Activated CD4-positive, alpha-beta memory T cell treated with anti-CD3 and anti-CD28 coated beads, Interleukin-2, amount 10 ng/mL, durations not matched to agents 7 days and 5 days (primary cell): ENCODE measurements at regions of chr1 and their contacts with region 1.

Region 1: DNA sequence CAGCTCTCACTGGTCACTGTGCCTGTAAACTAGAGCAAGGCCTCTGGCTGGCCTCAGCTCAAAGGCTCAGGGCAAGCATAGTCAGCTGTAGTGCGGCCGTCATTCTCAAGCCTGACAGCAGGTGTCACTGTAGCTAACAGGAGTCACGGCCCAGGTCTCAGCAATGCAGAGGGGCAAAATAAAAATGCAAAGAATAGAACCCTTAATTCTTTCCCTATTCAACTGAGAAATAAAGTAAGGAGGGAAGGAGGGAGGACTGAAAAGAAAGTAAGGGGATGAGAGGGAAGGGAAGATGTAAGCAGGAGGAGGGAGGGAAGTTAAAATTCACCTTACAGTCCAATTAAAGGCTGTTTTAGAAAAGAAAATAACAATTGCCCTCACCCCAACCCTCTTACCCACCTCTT is 106.1 kb downstream of the KIAA0319L start:
- DNase-seq: peak; percentile 81
- H3K4me3 Mint-ChIP-seq: no peak overlapping the region
- H3K27ac Mint-ChIP-seq: no peak overlapping the region
- H3K4me1 Mint-ChIP-seq: peaks cover 32% of the 10 kb centered on the region
- H3K27me3 Mint-ChIP-seq: no peaks in the 10 kb centered on the region

Region 2: GRCh38 chr1:35539073-35539823 is 88.1 kb after region 1 on chr1:
- CTCF ChIA-PET with region 1: interaction called, 55 read pairs
- POLR2A ChIA-PET with region 1: interaction called, 9 read pairs
- DNase-seq: peak; percentile 58
- H3K4me3 Mint-ChIP-seq: peak overlapping the region; percentile 58
- H3K27ac Mint-ChIP-seq: peak overlapping the region; percentile 92
- H3K4me1 Mint-ChIP-seq: peaks cover 45% of the 10 kb centered on the region
- H3K27me3 Mint-ChIP-seq: no peaks in the 10 kb centered on the region

Region 3: GRCh38 chr1:35557292-35558063 is 106.4 kb after region 1 on chr1 and contains the starts of genes KIAA0319L and NCDN:
- CTCF ChIA-PET with region 1: interaction called, 45 read pairs
- POLR2A ChIA-PET with region 1: interaction called, 44 read pairs
- DNase-seq: peak; percentile 97
- H3K4me3 Mint-ChIP-seq: peak within 1 kb of the TSS; percentile 95
- H3K27ac Mint-ChIP-seq: peak within 1 kb of the TSS; percentile 94
- H3K4me1 Mint-ChIP-seq: peaks cover 47% of the 10 kb centered on the region
- H3K27me3 Mint-ChIP-seq: no peaks in the 10 kb centered on the region
- total RNA-seq, gene KIAA0319L: 48.4 to 53.2 TPM
- total RNA-seq, gene NCDN: 25.6 to 27.8 TPM

Region 4: DNA sequence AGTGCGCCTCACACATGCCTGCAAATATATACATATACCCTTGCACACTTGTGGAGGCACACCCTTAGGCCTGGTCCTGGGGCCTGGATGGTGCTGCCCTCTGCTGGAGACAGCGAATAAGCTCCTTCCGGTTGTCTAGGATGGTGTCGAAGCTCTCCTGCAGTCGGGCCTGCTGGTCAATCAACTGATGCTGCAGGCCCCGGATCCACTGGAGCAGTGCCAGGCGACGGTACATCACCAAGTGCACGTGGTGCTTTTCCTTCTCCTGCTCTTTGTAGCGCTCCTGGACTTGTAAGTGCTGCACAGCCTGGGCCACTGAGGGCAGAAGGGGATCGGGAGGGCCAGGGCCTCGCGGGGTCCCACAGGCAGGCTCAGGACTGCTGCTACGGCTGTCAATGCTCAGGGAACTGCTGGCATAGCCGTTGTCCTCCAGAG is 264.5 kb after region 1 on chr1:
- CTCF ChIA-PET with region 1: interaction called, 16 read pairs
- POLR2A ChIA-PET with region 1: no interaction called
- DNase-seq: peak; percentile 83
- H3K4me3 Mint-ChIP-seq: no peak overlapping the region
- H3K27ac Mint-ChIP-seq: peak overlapping the region; percentile 51
- H3K4me1 Mint-ChIP-seq: peaks cover 31% of the 10 kb centered on the region
- H3K27me3 Mint-ChIP-seq: no peaks in the 10 kb centered on the region

Region 5: DNA sequence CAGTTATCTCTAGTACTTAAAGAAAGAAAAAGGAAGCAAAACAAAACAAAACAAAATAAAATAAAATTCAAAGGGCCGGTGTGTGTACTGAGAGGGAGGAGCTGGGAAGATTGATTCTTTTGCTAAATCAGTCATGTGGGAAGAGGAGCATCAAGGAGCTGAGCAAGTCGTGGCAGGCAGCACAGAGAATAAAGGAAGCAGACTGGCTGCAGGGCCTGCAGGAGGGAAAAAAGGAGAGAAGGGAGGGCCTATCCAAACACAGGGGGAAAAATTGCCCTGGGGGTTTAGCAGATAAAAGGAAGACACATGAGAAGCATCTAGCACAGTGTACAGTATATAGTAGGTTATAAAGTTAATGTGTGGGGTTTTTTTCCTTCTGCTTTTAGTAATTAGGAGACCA is 384.3 kb after region 1 on chr1:
- CTCF ChIA-PET with region 1: no interaction called
- POLR2A ChIA-PET with region 1: no interaction called
- DNase-seq: no peak
- H3K4me3 Mint-ChIP-seq: no peak overlapping the region
- H3K27ac Mint-ChIP-seq: no peak overlapping the region
- H3K4me1 Mint-ChIP-seq: no peaks in the 10 kb centered on the region
- H3K27me3 Mint-ChIP-seq: no peaks in the 10 kb centered on the region